Calu3 (cell line): ENCODE measurements at regions of chr2 and their contacts with region 1.

Region 1: DNA sequence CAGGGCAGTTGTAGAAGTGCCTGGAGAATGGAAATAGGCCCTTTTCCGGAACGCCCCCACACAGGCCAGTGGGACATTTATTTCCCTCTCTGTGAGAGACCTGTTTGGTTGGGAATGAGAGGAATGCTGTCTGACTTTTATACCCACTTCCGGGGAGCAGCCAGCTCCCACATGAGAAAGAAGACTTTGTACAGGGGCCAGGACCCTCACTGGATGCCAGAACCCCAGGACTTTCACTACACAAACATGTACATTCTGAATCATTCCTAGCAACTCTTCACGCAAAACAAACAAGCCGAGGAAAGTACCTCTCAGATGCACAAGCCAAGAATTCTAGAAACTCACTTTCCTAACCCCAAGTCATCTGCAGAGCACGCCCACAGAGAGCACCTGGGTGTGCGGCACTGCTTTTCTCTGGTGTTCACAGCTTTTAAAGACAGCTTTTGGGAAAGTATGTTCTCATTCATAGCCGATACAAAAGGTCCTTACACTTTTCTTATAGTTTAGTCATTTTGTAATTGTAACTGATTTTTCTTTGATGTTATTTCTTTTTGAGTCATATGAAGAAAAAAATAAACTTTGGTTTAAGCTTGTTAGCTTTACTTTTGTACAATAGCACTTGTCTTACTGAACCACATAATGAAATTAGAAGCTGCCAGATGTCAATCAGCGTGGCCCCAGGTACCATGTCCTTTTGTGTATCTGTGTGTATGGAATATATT is 856.1 kb upstream of the ID2 start:
- DNase-seq: peak; percentile 83
- H3K4me3 Mint-ChIP-seq: peak overlapping the region; percentile 62
- H3K27ac Mint-ChIP-seq: peak overlapping the region; percentile 95
- H3K4me1 Mint-ChIP-seq: peaks cover 30% of the 10 kb centered on the region
- H3K27me3 Mint-ChIP-seq: no peaks in the 10 kb centered on the region
- CTCF ChIP-seq: no peak

Region 2: GRCh38 chr2:7427293-7428060 is 398.3 kb before region 1 on chr2:
- CTCF ChIA-PET with region 1: interaction called, 5 read pairs
- intact Hi-C with region 1: loop called (anchors 2 kb)
- DNase-seq: peak; percentile 44
- H3K4me3 Mint-ChIP-seq: no peak overlapping the region
- H3K27ac Mint-ChIP-seq: no peak overlapping the region
- H3K4me1 Mint-ChIP-seq: peaks cover 30% of the 10 kb centered on the region
- H3K27me3 Mint-ChIP-seq: no peaks in the 10 kb centered on the region
- CTCF ChIP-seq: peak; percentile 35

Region 3: GRCh38 chr2:7725171-7725849 is 100.4 kb before region 1 on chr2:
- CTCF ChIA-PET with region 1: no interaction called
- intact Hi-C with region 1: loop called (anchors 1 kb)
- DNase-seq: no peak
- H3K4me3 Mint-ChIP-seq: no peak overlapping the region
- H3K27ac Mint-ChIP-seq: peak overlapping the region; percentile 1
- H3K4me1 Mint-ChIP-seq: peaks cover 13% of the 10 kb centered on the region
- H3K27me3 Mint-ChIP-seq: no peaks in the 10 kb centered on the region
- CTCF ChIP-seq: no peak

Region 4: DNA sequence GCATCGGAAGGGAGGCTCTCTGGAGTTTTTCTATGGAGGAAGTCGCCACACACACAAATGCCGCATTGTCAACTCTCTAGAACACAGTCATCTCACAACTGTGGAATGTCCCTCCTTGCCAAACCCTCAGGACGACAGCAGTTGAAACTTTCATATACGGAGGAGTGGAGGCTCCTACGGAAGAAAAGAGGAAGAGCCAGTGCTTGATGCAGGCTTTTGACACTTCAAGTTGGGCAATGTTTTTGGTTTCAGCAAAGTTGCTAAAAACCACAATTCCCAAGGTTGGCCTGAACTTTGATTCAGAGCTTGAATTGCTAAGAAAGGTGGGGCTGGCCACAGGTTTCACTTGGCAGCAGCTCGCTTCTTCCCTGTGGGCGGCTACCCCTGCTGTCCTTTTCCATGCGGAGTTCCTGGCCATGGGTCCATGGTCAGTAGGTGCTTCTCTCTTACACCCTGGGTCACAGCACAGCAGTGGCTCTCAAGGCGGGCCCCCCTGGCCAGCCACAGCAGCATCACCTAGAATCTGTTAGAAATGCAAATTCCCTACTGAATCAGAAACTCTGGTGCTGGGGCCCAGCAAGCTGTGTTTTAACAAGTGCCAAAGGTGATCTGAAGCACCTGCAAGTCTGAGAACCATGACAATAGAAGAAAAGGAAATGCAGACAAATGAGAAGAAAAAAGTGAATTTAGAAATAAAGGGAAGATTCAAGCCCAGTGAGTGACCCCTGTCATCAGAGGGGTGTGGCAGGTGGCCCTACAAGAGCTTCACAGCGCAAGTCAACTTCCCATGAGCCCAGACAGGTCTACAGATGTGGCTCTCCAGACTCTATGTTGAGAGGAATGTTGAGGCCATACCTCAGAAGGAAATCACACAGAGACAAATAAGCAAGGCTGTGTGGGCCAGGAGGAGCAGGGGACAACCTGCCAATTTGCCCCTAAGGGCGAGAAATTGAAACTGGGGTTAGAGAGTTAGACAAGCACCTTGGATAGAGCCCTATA is 52.1 kb before region 1 on chr2:
- CTCF ChIA-PET with region 1: interaction called, 11 read pairs
- intact Hi-C with region 1: loop called (anchors 1 kb)
- DNase-seq: peak; percentile 76
- H3K4me3 Mint-ChIP-seq: peak overlapping the region; percentile 17
- H3K27ac Mint-ChIP-seq: peak overlapping the region; percentile 90
- H3K4me1 Mint-ChIP-seq: peaks cover 29% of the 10 kb centered on the region
- H3K27me3 Mint-ChIP-seq: no peaks in the 10 kb centered on the region
- CTCF ChIP-seq: no peak

Region 5: DNA sequence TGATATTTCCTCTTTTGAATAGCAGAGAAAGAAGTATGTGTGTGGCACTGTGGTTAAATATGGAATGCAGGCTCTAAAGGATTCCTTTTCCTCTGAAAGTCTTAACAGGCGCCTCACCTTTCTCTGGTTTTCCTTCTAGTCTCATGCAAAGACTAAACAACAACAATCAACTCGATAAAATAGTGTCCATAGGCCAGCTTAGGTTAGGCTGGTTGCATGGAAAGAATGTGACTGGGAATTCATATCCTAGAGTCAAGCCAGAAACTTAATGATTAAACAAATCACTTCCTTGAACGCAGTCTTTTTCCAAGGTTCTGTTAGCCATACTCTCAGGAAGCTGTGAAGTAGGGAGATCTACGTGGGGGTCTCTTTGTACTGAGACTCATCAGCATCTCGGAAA is 55.3 kb after region 1 on chr2:
- CTCF ChIA-PET with region 1: no interaction called
- intact Hi-C with region 1: loop called (anchors 5 kb)
- DNase-seq: peak; percentile 10
- H3K4me3 Mint-ChIP-seq: peak overlapping the region; percentile 34
- H3K27ac Mint-ChIP-seq: peak overlapping the region; percentile 82
- H3K4me1 Mint-ChIP-seq: peaks cover 40% of the 10 kb centered on the region
- H3K27me3 Mint-ChIP-seq: no peaks in the 10 kb centered on the region
- CTCF ChIP-seq: no peak

Region 6: GRCh38 chr2:8202132-8202531 is 376.4 kb after region 1 on chr2:
- CTCF ChIA-PET with region 1: no interaction called
- intact Hi-C with region 1: no loop called
- DNase-seq: no peak
- H3K4me3 Mint-ChIP-seq: no peak overlapping the region
- H3K27ac Mint-ChIP-seq: no peak overlapping the region
- H3K4me1 Mint-ChIP-seq: no peaks in the 10 kb centered on the region
- H3K27me3 Mint-ChIP-seq: no peaks in the 10 kb centered on the region
- CTCF ChIP-seq: no peak